Heart right ventricle (tissue), 16 donors: ENCODE measurements at regions of chrX and their contacts with region 1.

Region 1: GRCh38 chrX:40647307-40648197 is at the start of gene CXorf38:
- DNase-seq: peak; percentile 87 to 92
- ATAC-seq: peak; percentile 77 to 94 (median 88)
- H3K4me3 ChIP-seq: peak within 1 kb of the TSS; percentile 67 to 88 (median 78)
- H3K27ac ChIP-seq: peak within 1 kb of the TSS; percentile 54 to 91 (median 82)
- H3K4me1 ChIP-seq: peaks cover 0 to 46% (median 26%) of the 10 kb centered on the region in 9 donors
- H3K27me3 ChIP-seq: peaks cover 0 to 12% (median 0%) of the 10 kb centered on the region in 7 donors
- CTCF ChIP-seq: no peak
- total RNA-seq, gene CXorf38: 3.4 to 11.9 (median 4.9) TPM

Region 2: DNA sequence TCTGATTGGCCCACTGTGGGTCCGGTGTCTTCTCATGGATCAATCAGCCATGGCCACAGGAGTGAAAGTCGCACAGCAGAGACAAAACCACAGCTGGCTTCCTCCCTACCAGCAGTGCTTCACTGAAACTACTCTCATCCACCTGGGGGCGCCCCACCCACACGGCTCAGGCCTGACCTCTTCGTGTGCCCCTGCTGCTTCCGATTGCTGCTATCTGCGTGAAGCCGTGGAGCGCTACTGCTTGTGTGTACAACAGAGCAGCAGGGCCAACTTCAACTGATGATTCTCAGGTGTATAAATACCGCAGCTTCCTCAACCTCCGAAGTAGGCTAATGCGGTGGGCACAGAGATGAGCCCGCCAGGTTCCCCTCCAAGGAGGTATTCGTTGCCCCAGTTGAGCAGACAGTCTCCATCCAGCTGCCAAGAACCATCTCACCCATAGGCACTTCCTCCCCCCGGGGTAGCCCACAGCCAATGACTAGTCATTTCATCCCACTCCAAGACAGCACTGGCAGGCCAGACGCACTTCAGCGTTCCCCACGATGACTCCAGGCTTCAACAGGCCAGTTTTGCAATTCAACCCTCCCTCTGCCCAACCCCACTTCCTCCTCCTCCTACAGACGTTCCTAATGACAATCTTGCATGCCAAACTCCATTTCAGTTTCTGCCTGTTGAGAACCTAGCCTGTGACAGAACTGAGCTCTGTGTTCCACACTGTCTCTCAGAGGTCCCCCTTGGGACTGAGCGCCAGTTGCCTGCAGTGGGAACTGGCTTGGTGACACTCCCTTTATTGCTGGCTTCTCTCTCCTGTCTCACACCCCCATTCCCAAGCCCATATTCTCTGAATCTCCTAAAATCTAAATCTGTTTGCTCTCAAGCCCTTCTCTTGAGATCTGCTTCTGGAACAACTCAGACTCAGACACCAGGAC is 108.1 kb before region 1 on chrX:
- intact Hi-C with region 1: loop called in 3 of 10 experiments (anchors 10 kb)
- DNase-seq: peak; percentile 18 to 19
- ATAC-seq: peak; percentile 69 to 93 (median 72)
- H3K4me3 ChIP-seq: peak overlapping the region in 1 of 10 donors; percentile 20
- H3K27ac ChIP-seq: peak overlapping the region in 4 of 10 donors; percentile 31 to 67 (median 37)
- H3K4me1 ChIP-seq: peaks cover 0 to 19% (median 0%) of the 10 kb centered on the region in 9 donors
- H3K27me3 ChIP-seq: peaks cover 0 to 95% (median 0%) of the 10 kb centered on the region in 7 donors
- CTCF ChIP-seq: peak in 1 of 9 donors; percentile 29

Region 3: DNA sequence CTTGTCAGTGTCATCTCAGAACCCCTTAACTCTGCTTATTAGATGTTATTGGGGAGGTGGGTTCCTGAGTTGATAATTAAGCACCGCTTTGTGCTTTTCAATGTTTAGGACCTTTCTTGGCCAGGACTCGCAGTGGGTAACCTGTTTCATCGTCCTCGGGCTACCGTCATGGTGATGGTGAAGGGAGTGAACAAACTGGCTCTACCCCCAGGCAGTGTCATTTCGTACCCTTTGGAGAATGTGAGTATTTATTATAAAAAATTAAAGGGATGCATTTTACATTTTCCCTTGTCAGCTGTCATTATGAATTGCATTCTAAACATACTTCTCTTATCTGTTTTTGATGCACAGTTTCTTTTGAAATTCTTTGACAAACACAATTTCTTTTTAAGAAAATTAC is 56.4 kb before region 1 on chrX:
- intact Hi-C with region 1: no loop called
- DNase-seq: no peak
- ATAC-seq: no peak
- H3K4me3 ChIP-seq: no peak overlapping the region
- H3K27ac ChIP-seq: no peak overlapping the region
- H3K4me1 ChIP-seq: peaks cover 0 to 5% (median 0%) of the 10 kb centered on the region in 9 donors
- H3K27me3 ChIP-seq: peaks cover 0 to 86% (median 0%) of the 10 kb centered on the region in 7 donors
- CTCF ChIP-seq: no peak

Region 4: GRCh38 chrX:41259516-41259915 is 612.0 kb after region 1 on chrX:
- intact Hi-C with region 1: loop called in 3 of 10 experiments (anchors 10 kb)
- DNase-seq: no peak
- ATAC-seq: no peak
- H3K4me3 ChIP-seq: no peak overlapping the region
- H3K27ac ChIP-seq: no peak overlapping the region
- H3K4me1 ChIP-seq: no peaks in the 10 kb centered on the region
- H3K27me3 ChIP-seq: peaks cover 0 to 43% (median 0%) of the 10 kb centered on the region in 7 donors
- CTCF ChIP-seq: no peak